ENCODE measurements at regions of chr10 and their contacts with region 1.

Region 1: GRCh38 chr10:11113156-11113555 is 95.5 kb downstream of the CELF2 start:
- DNase-seq: peak in 1 of 2 experiments; percentile 7
- H3K4me3 ChIP-seq: no peak overlapping the region
- H3K4me1 ChIP-seq: no peaks in the 10 kb centered on the region
- H3K27me3 ChIP-seq: no peaks in the 10 kb centered on the region

Region 2: DNA sequence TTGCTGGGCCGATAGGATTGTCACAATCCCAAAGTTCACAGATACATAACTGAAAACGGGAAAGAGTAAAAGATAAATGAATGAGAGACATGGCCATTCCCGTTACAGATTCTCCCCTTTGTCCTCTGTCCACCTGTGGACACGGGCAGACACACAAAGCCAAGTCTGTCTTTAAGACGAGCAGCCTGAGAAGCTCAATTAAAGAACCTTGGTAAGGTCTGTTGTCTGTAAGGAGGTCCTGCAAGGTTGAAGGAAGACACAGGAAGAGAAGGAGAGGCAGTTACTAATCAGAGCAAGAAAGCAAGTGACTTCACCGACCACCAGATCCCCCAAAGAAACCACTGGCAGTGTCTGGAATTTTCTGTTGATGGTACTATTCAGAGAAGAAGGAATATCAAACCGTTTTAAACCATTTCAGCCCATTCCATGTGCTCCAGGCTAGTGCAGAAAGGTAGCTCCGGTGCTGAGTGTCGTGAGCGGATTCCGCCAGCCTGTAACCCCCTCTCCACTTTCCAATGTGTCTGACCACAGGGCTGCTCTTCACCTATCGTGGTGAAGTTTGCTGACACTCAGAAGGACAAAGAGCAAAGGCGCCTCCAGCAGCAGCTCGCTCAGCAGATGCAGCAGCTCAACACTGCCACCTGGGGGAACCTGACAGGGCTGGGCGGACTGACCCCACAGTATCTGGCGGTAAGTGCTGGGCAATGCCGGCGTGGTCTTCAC is 157.1 kb after region 1 on chr10:
- in situ Hi-C with region 1: loop called (anchors 10 kb)
- DNase-seq: peak; percentile 77 to 93
- H3K4me3 ChIP-seq: no peak overlapping the region
- H3K4me1 ChIP-seq: peaks cover 11% of the 10 kb centered on the region
- H3K27me3 ChIP-seq: no peaks in the 10 kb centered on the region

Measured in HAP-1 (cell line).